Common myeloid progenitor, CD34-positive (primary cell): ENCODE measurements at regions of chr2 and their contacts with region 1.

Region 1: GRCh38 chr2:47767880-47768609 is 14.9 kb upstream of the MSH6 start:
- DNase-seq: peak; percentile 53 to 62 (median 57)
- H3K4me3 ChIP-seq: peak overlapping the region in 1 of 7 experiments; percentile 20
- H3K27ac ChIP-seq: no peak overlapping the region
- H3K4me1 ChIP-seq: no peaks in the 10 kb centered on the region
- H3K27me3 ChIP-seq: no peaks in the 10 kb centered on the region

Region 2: DNA sequence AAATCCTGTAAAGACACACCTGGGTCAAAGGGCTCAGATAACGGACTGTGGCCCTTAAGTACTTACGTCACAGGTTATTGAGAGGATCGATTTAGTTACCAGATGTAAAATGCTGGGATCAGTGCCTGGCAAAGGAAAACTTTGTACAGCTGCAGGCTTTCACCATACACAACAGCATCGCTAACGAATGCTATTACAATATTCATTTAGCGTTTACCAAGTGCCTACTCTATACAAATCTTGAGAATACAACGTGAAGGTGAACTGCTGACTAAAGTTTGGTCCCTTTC is 14.3 kb after region 1 on chr2:
- CTCF ChIA-PET with region 1: interaction called, 11 read pairs
- POLR2A ChIA-PET with region 1: interaction called, 6 read pairs
- DNase-seq: no peak
- H3K4me3 ChIP-seq: peak overlapping the region; percentile 44 to 93 (median 86)
- H3K27ac ChIP-seq: peak overlapping the region; percentile 61 to 87
- H3K4me1 ChIP-seq: peaks cover 8 to 40% (median 29%) of the 10 kb centered on the region in 4 experiments
- H3K27me3 ChIP-seq: no peaks in the 10 kb centered on the region

Region 3: GRCh38 chr2:47867205-47867604 is 99.2 kb after region 1 on chr2:
- CTCF ChIA-PET with region 1: no interaction called
- POLR2A ChIA-PET with region 1: no interaction called
- DNase-seq: peak; percentile 52 to 79 (median 73)
- H3K4me3 ChIP-seq: peak overlapping the region in 1 of 7 experiments; percentile 7
- H3K27ac ChIP-seq: peak overlapping the region; percentile 20 to 25
- H3K4me1 ChIP-seq: peaks cover 11 to 58% (median 34%) of the 10 kb centered on the region in 4 experiments
- H3K27me3 ChIP-seq: no peaks in the 10 kb centered on the region

Region 4: GRCh38 chr2:48080534-48081316 is 312.7 kb after region 1 on chr2:
- CTCF ChIA-PET with region 1: no interaction called
- POLR2A ChIA-PET with region 1: no interaction called
- DNase-seq: no peak
- H3K4me3 ChIP-seq: no peak overlapping the region
- H3K27ac ChIP-seq: no peak overlapping the region
- H3K4me1 ChIP-seq: no peaks in the 10 kb centered on the region
- H3K27me3 ChIP-seq: no peaks in the 10 kb centered on the region